PC-3 (cell line): ENCODE measurements at regions of chr2 and their contacts with region 1.

Region 1: GRCh38 chr2:159137511-159138241 is 148.8 kb downstream of the WDSUB1 start:
- DNase-seq: peak; percentile 31
- ATAC-seq: peak; percentile 69
- H3K4me3 ChIP-seq: no peak overlapping the region
- H3K27ac ChIP-seq: no peak overlapping the region
- H3K4me1 ChIP-seq: peaks cover 13% of the 10 kb centered on the region
- H3K27me3 ChIP-seq: no peaks in the 10 kb centered on the region
- CTCF ChIP-seq: no peak

Region 2: DNA sequence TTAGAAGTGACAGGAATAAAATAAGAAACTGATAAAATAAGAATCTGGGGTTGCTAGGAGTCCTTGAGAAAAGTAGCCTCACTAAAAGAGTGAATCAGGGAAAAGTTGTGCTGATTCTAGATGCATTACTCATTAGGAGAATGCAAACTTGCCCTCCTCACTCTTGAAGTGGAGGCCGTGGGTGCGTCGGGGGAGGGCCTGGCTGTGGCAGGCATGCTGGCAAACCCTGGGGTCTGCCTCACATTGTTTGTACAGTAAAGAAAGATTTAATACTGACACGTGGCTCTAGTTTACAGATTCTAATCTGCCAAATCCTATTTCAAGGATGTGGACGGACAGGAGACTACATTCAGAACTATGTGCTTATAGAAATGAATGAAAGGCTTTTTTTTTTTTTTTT is 127.3 kb before region 1 on chr2:
- CTCF ChIA-PET with region 1: no interaction called
- POLR2A ChIA-PET with region 1: no interaction called
- intact Hi-C with region 1: no loop called
- DNase-seq: peak; percentile 71
- ATAC-seq: peak; percentile 89
- H3K4me3 ChIP-seq: no peak overlapping the region
- H3K27ac ChIP-seq: 0 out of 2 replicates have a peak overlapping the region, but pooled peaks have one; percentile 19
- H3K4me1 ChIP-seq: peaks cover 20% of the 10 kb centered on the region
- H3K27me3 ChIP-seq: no peaks in the 10 kb centered on the region
- CTCF ChIP-seq: no peak

Region 3: GRCh38 chr2:159157361-159158209 is 19.9 kb after region 1 on chr2:
- CTCF ChIA-PET with region 1: no interaction called
- POLR2A ChIA-PET with region 1: no interaction called
- intact Hi-C with region 1: loop called (anchors 2 kb)
- DNase-seq: no peak
- ATAC-seq: no peak
- H3K4me3 ChIP-seq: no peak overlapping the region
- H3K27ac ChIP-seq: no peak overlapping the region
- H3K4me1 ChIP-seq: peaks cover 28% of the 10 kb centered on the region
- H3K27me3 ChIP-seq: no peaks in the 10 kb centered on the region
- CTCF ChIP-seq: no peak

Region 4: DNA sequence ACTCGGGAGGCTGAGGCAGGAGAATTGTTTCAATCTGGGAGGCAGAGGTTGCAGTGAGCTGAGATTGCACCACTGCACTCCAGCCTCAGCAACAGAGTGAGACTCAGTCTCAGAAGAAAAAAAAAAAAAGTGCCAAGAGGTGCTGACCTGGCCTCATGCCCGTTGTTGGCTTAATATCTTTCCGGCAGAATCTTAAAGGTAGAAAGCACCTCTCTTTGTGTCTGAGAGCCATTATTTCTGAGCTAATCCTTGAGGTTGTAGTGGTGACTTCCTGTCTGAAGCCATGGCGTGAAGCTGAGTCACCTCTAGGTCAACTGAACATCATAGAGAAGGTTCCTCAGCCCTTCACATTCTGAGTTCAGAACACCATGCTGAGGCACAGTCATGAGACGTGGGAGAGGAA is 88.4 kb after region 1 on chr2:
- CTCF ChIA-PET with region 1: no interaction called
- POLR2A ChIA-PET with region 1: interaction called, 17 read pairs
- intact Hi-C with region 1: no loop called
- DNase-seq: peak; percentile 47
- ATAC-seq: peak; percentile 84
- H3K4me3 ChIP-seq: no peak overlapping the region
- H3K27ac ChIP-seq: no peak overlapping the region
- H3K4me1 ChIP-seq: peaks cover 5% of the 10 kb centered on the region; the same call in 1 of the 2 replicates
- H3K27me3 ChIP-seq: no peaks in the 10 kb centered on the region
- CTCF ChIP-seq: no peak